GM23248 (cell line): ENCODE measurements at regions of chr17 and their contacts with region 1.

Region 1: DNA sequence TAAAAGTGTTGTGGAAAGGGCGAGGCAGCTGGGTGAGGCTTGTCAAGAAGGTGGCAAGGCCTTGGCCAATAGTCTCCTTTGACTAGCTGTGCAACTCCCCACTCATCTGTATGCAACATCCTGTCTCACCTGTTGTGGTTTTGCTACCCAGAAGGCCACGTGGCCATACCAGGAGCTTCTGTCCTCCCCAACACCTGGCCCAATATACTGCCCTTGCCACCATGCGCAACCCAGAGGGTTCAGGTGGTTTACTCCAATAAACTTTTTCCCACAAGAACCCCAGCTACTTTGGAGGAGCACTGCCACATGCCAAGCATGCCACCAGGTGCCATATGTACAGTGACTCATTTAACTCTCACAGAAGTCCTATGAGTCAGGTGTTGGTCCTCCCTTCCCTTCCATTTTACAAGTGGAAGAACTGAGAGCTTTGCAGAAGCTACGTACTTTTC is 10.2 kb downstream of the MYO19 start:
- DNase-seq: peak; percentile 37
- H3K4me3 ChIP-seq: no peak overlapping the region
- H3K27ac ChIP-seq: no peak overlapping the region
- H3K4me1 ChIP-seq: peaks cover 18% of the 10 kb centered on the region
- H3K27me3 ChIP-seq: no peaks in the 10 kb centered on the region

Region 2: DNA sequence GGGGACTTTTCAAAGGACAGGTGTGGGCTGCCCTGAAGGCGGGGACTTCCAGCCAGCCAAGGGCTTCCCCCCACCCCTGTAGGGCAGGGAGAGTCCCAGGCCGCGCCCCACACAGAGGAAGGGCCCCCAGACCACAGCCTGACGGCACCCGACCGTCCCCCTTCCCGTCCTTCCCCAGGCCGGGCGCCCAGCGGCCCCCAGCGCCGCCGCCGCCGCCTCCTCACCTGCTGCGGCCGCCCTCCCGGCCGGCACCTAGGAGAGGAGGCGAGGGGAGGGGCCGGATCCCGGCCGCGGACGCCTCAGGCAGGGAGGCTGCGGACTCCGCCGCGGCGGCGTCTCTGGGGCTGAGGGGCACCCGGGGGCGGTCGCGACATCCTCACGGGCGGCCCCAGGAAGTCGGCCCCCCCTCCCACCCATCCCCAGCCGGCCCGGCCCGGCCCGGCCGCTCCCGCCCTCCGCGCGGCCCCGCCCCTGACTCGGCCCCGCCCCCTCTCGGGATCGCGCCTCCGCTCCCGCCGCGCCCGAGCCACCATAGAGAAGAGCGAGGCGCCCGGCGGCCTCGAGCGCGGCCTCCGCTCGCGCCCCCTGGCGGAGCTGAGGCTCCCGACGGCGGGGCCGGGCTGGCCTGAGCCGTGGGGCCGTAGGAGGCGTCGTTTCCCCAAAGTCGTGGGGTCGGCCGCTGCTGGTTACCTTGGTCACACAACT is 1435.4 kb before region 1 on chr17:
- in situ Hi-C with region 1: loop called (anchors 25 kb)
- DNase-seq: peak; percentile 95
- H3K4me3 ChIP-seq: peak overlapping the region; percentile 75
- H3K27ac ChIP-seq: peak overlapping the region; percentile 10; the same call in 1 of the 2 replicates
- H3K4me1 ChIP-seq: peaks cover 19% of the 10 kb centered on the region
- H3K27me3 ChIP-seq: no peaks in the 10 kb centered on the region

Region 3: DNA sequence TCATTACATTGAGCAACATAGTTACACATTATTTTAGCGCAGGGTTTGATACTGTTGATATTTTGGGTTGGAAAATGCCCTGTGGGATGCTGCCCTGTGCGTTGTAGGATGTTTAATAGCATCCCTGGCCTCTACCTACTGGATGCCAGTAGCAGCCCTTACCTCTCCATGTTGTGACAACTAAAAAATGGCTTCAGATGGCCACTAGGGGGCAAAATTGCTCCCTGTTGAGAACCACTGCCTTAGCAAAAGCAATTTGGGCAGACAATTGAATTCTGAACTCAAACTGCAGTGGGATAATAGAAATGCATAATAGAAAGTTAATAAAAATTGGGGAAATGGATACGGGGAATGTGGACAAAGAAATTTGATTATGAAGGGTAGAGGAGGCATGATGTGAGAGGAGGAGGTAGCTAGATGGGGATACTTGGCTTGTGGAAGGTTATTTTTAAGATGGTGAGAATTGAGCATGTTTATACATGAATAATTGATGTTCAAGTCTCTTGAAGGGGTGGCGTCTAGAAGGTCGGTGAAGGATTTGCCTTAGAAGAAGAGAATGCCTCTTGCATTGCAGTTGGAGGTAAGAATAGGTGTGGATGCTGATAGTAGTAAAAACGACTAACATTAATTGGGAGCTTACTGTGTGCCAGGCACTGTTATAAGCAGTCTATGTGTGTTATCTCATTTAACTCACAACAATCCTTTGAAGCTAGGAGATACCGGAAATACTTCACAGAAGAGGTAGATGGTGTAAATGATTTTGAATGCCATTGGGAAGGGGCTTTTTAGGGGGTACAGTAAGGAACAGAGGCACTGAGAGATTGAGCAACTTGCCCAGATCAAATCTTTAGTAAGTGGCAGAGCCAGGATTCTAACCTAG is 674.7 kb before region 1 on chr17:
- in situ Hi-C with region 1: loop called (anchors 25 kb)
- DNase-seq: peak; percentile 67
- H3K4me3 ChIP-seq: no peak overlapping the region
- H3K27ac ChIP-seq: no peak overlapping the region
- H3K4me1 ChIP-seq: peaks cover 7% of the 10 kb centered on the region; the same call in 1 of the 2 replicates
- H3K27me3 ChIP-seq: no peaks in the 10 kb centered on the region

Region 4: DNA sequence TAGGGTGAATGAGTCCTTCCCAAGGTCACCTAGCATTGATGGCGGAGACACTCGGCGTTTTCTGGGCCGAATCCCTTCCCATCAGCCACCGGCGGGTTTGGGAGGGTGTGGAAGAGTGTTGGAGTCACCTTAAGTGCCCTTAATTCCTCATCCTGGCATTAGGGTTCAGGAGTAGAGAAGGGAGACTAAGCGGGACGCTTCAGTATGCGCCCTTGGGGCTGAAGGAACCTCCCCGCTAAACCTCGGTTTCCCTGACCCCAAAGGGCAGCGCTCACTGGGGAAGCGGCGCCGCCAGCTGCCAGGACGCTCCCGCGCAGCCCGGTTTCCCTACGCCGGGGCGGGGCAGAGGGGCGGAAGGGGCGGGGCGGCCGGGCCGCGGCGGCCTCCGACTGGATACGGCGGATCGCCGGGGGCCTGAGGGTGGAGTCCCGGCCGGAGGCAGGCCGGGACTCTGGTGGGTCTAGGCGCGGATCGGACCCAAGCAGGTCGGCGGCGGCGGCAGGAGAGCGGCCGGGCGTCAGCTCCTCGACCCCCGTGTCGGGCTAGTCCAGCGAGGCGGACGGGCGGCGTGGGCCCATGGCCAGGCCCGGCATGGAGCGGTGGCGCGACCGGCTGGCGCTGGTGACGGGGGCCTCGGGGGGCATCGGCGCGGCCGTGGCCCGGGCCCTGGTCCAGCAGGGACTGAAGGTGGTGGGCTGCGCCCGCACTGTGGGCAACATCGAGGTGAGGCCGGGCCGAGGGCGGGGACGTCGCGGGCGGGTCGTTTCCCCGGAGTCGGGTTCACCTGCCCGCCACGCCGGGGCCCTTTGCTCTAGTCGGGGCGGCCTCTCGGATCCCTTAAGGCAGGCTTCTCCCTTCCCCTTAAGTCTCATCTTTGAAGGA is 67.2 kb after region 1 on chr17 and contains the start of gene DHRS11:
- in situ Hi-C with region 1: no loop called
- DNase-seq: peak; percentile 90
- H3K4me3 ChIP-seq: peak within 1 kb of the TSS; percentile 80
- H3K27ac ChIP-seq: peak within 1 kb of the TSS; percentile 36
- H3K4me1 ChIP-seq: peaks cover 12% of the 10 kb centered on the region
- H3K27me3 ChIP-seq: no peaks in the 10 kb centered on the region
- total RNA-seq, gene DHRS11: 3.1 and 3.9 TPM in 2 replicates